ENCODE measurements at regions of chr17 and their contacts with region 1.

Region 1: GRCh38 chr17:2724778-2725164 is 13.2 kb upstream of the CLUH start:
- DNase-seq: peak; percentile 61 to 77
- H3K4me3 ChIP-seq: peak overlapping the region in 3 of 4 experiments; percentile 17 to 67 (median 27); a peak in 5 of 8 replicates
- H3K27ac ChIP-seq: no peak overlapping the region
- H3K4me1 ChIP-seq: peaks cover 1 to 21% (median 7%) of the 10 kb centered on the region in 4 experiments
- H3K27me3 ChIP-seq: peaks cover 0 to 4% (median 2%) of the 10 kb centered on the region in 4 experiments; a peak in 1 of 7 replicates
- CTCF ChIP-seq: peak; percentile 15 to 49 (median 36); a peak in 3 of 4 replicates
- EP300 ChIP-seq: no peak
- POLR2A ChIP-seq: no peak
- RAD21 ChIP-seq: peak; percentile 16 to 35; a peak in 3 of 4 replicates

Region 2: DNA sequence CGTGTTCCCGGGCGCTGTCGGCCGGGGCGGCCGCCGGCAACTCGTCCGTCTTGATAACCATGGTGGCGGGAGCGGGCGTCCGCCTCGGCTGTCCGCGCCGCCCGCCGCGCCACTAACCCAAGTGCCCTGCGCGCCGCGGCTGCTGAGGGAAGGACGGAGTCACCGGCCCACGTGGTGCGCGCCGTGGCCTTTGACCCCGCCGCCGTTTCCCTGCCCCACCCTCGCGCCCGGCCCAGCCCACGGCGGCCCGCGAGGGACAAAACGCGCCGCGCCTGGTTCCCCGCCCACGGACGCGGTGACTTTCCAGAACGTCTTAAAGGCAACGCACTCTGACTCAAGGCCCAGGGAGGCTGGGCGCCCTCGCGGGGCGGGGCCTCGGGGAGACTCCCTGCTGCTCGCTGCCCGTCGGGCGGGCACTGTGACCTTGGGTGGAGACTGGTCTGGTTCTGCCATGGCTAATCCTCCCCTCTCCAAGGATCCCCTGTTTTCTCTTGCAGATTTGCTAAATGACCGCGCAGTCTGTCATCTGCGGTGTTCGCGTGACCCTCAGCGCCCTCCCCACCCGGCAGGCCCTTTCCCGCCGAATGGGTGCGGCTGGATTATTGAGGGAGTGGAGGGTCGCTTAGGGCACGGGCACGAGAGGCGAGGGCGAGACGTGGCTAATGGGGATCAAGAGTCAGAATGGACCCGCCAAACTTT is 13.0 kb before region 1 on chr17 and contains the start of gene CLUH:
- CTCF ChIA-PET with region 1: interaction called, 62 read pairs
- POLR2A ChIA-PET with region 1: interaction called, 23 read pairs
- DNase-seq: peak in 1 of 2 experiments; percentile 83
- H3K4me3 ChIP-seq: peak within 1 kb of the TSS; percentile 59 to 66 (median 62)
- H3K27ac ChIP-seq: no peak within 1 kb of the TSS
- H3K4me1 ChIP-seq: peaks cover 4 to 35% (median 24%) of the 10 kb centered on the region in 4 experiments
- H3K27me3 ChIP-seq: peaks cover 0 to 9% (median 6%) of the 10 kb centered on the region in 4 experiments; a peak in 5 of 7 replicates
- CTCF ChIP-seq: no peak
- EP300 ChIP-seq: no peak
- POLR2A ChIP-seq: peak in 1 of 2 experiments; percentile 59; a peak in 1 of 3 replicates
- RAD21 ChIP-seq: no peak
- total RNA-seq, gene CLUH: 93.6 and 98.6 TPM in 2 replicates

Region 3: GRCh38 chr17:2736956-2737355 is 12.2 kb after region 1 on chr17:
- CTCF ChIA-PET with region 1: interaction called, 4 read pairs
- POLR2A ChIA-PET with region 1: interaction called, 18 read pairs
- DNase-seq: no peak
- H3K4me3 ChIP-seq: no peak overlapping the region
- H3K27ac ChIP-seq: no peak overlapping the region
- H3K4me1 ChIP-seq: no peaks in the 10 kb centered on the region
- H3K27me3 ChIP-seq: no peaks in the 10 kb centered on the region
- CTCF ChIP-seq: no peak
- EP300 ChIP-seq: no peak
- POLR2A ChIP-seq: no peak
- RAD21 ChIP-seq: no peak

Region 4: DNA sequence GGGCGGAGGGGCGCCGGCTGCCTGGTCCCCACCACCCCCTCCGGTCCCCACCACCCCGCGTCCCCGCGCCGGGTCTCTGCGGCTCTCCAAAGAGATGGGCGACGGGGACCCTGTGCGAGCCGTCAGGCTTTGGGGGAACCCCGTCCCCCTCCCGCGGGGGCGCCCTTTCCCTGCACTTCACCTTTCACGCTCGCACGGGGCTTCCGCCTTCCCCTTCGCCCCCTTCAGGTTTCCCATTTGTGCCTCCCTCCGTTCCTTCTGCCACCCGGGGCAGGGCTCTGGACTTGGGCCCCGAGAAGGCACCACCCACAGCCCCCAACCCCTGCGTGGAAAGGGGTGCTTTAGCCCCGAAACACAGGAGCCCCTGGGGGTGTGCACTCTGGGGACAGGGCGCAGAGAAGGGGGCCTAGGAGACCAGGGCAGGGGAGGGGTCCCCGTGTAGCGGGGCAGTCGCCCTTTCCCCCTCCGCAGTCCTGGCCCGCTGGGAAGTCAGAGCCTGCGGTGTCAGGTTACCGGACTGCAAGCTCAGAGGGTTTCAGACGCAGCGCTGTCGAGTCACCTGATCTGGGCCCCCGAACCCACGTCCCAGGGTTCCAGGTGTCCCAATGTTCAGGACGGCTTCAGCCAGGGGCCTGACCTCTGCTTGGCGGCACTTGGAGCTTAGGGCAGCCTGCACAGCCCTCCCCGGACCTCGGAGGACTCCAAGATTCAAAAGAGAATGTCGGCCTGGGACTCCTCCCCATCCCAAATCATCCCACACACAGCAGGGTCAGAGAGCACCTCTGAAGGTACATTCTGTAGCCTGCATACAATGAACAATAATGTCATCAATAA is 31.3 kb after region 1 on chr17:
- CTCF ChIA-PET with region 1: interaction called, 5 read pairs
- POLR2A ChIA-PET with region 1: interaction called, 13 read pairs
- DNase-seq: peak in 1 of 2 experiments; percentile 88
- H3K4me3 ChIP-seq: peak overlapping the region; percentile 47 to 80 (median 62)
- H3K27ac ChIP-seq: no peak overlapping the region
- H3K4me1 ChIP-seq: peaks cover 4 to 6% (median 4%) of the 10 kb centered on the region in 4 experiments; a peak in 5 of 7 replicates
- H3K27me3 ChIP-seq: peaks cover 0 to 8% (median under 1%) of the 10 kb centered on the region in 4 experiments; a peak in 3 of 7 replicates
- CTCF ChIP-seq: peak in 1 of 3 experiments; percentile 8; a peak in 1 of 4 replicates
- EP300 ChIP-seq: no peak
- POLR2A ChIP-seq: no peak
- RAD21 ChIP-seq: no peak; a peak in 1 of 4 replicates

Region 5: DNA sequence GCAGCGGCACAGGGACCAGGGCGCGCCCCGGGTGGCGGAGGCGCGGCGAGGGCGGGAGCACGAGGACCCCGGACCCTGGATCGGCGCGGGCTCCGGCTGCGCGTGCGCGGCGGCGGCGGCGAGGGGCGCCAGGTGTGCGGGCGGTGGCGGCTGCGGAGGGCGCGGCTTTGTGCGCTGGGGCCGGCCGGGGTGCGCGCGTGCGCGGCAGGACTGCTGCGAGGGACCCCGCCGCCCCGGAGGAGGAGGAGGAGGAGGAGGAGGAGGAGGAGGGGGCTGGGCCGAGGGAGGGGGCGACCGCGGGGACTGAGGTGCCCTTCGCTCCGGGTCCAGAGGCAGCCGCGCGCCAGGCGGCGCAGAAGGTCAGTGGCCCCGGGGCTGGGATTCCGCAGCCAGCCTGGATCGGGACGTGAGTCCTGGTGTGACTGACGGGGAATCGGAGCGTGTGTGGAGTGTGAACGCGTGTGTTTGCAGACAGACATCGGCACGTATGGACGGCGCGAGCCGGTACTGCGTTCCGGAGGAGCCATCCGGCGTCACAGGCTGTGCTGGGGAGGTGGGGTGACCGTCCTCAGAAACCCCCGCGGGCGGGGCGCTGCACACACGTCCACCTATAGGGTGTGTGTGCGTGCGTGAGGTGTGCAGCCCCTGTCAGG is 51.9 kb after region 1 on chr17:
- CTCF ChIA-PET with region 1: interaction called, 9 read pairs
- POLR2A ChIA-PET with region 1: interaction called, 10 read pairs
- DNase-seq: peak in 1 of 2 experiments; percentile 86
- H3K4me3 ChIP-seq: peak overlapping the region; percentile 72 to 86 (median 80)
- H3K27ac ChIP-seq: no peak overlapping the region
- H3K4me1 ChIP-seq: peaks cover 0 to 7% (median 5%) of the 10 kb centered on the region in 4 experiments; a peak in 4 of 7 replicates
- H3K27me3 ChIP-seq: peaks cover 0 to 5% (median 4%) of the 10 kb centered on the region in 4 experiments; a peak in 2 of 7 replicates
- CTCF ChIP-seq: no peak
- EP300 ChIP-seq: no peak
- POLR2A ChIP-seq: no peak; a peak in 1 of 3 replicates
- RAD21 ChIP-seq: no peak